PC-9 (cell line): ENCODE measurements at regions of chr3 and their contacts with region 1.

Region 1: GRCh38 chr3:24680214-24680967 is 185.7 kb upstream of the THRB start:
- DNase-seq: peak in 1 of 2 experiments; percentile 12
- H3K4me3 ChIP-seq: no peak overlapping the region
- H3K27ac ChIP-seq: no peak overlapping the region
- H3K4me1 ChIP-seq: peaks cover 24% of the 10 kb centered on the region
- H3K27me3 ChIP-seq: no peaks in the 10 kb centered on the region
- CTCF ChIP-seq: peak; percentile 56; the same call in 1 of the 2 replicates

Region 2: GRCh38 chr3:23888617-23889228 is 791.7 kb before region 1 on chr3:
- CTCF ChIA-PET with region 1: no interaction called
- POLR2A ChIA-PET with region 1: no interaction called
- intact Hi-C with region 1: loop called (anchors 5 kb)
- DNase-seq: no peak
- H3K4me3 ChIP-seq: no peak overlapping the region
- H3K27ac ChIP-seq: peak overlapping the region; percentile 57
- H3K4me1 ChIP-seq: peaks cover 28% of the 10 kb centered on the region
- H3K27me3 ChIP-seq: no peaks in the 10 kb centered on the region
- CTCF ChIP-seq: peak; percentile 92

Region 3: GRCh38 chr3:24069045-24069444 is 611.3 kb before region 1 on chr3:
- CTCF ChIA-PET with region 1: no interaction called
- POLR2A ChIA-PET with region 1: no interaction called
- intact Hi-C with region 1: loop called (anchors 1 kb)
- DNase-seq: peak in 1 of 2 experiments; percentile 17
- H3K4me3 ChIP-seq: no peak overlapping the region
- H3K27ac ChIP-seq: no peak overlapping the region
- H3K4me1 ChIP-seq: no peaks in the 10 kb centered on the region
- H3K27me3 ChIP-seq: no peaks in the 10 kb centered on the region
- CTCF ChIP-seq: peak; percentile 57

Region 4: DNA sequence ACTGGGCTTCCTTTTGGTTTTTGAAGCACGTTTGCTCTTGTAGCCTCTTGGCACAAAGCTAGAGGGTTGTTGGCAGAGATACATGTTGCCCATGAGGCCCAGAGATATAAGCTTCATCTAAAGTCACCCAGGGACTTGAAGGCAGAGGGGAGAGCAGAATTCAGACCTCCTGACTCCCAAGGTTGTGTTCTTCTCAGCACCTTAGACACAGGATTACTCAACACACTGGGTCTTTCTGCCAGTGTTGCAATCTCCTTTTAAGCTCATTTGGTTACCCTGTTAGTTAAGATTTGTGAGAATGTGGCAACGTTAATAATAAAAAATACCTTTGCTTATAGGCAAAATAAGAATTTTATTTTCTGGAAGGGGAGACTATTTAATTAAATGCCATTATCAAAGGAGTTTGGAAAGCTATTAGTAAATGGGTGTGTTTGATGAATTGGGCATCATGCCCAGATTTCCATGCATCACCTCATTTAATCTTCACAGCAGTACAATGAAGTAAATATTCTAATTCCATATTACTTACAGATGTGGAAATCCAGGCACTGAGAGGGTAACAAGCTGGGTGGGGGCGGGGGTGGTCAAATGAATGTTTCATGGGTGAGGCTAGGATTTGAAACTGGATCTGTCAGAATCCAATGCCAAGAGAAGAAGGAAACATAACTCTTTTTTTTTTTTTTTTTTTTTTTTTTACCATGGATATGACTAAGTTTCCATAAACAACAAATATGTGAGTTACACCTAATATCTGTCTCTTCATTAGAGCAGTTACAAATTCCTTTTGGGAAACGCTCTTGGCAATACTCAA is 552.0 kb before region 1 on chr3:
- CTCF ChIA-PET with region 1: no interaction called
- POLR2A ChIA-PET with region 1: no interaction called
- intact Hi-C with region 1: no loop called
- DNase-seq: peak; percentile 19 to 76
- H3K4me3 ChIP-seq: no peak overlapping the region
- H3K27ac ChIP-seq: peak overlapping the region; percentile 49
- H3K4me1 ChIP-seq: peaks cover 23% of the 10 kb centered on the region
- H3K27me3 ChIP-seq: no peaks in the 10 kb centered on the region
- CTCF ChIP-seq: no peak

Region 5: GRCh38 chr3:24185738-24186384 is 494.5 kb before region 1 on chr3:
- CTCF ChIA-PET with region 1: no interaction called
- POLR2A ChIA-PET with region 1: no interaction called
- intact Hi-C with region 1: loop called (anchors 1 kb)
- DNase-seq: peak in 1 of 2 experiments; percentile 12
- H3K4me3 ChIP-seq: no peak overlapping the region
- H3K27ac ChIP-seq: no peak overlapping the region
- H3K4me1 ChIP-seq: no peaks in the 10 kb centered on the region
- H3K27me3 ChIP-seq: no peaks in the 10 kb centered on the region
- CTCF ChIP-seq: peak; percentile 69

Region 6: GRCh38 chr3:24494618-24495325 is 185.6 kb before region 1 on chr3 and contains the start of gene THRB:
- CTCF ChIA-PET with region 1: no interaction called
- POLR2A ChIA-PET with region 1: no interaction called
- intact Hi-C with region 1: loop called (anchors 2 kb)
- DNase-seq: peak; percentile 49 to 75
- H3K4me3 ChIP-seq: peak within 1 kb of the TSS; percentile 65
- H3K27ac ChIP-seq: peak within 1 kb of the TSS; percentile 89
- H3K4me1 ChIP-seq: peaks cover 46% of the 10 kb centered on the region
- H3K27me3 ChIP-seq: no peaks in the 10 kb centered on the region
- CTCF ChIP-seq: peak; percentile 36; the same call in 1 of the 2 replicates
- total RNA-seq, gene THRB: 9.7 and 11.2 TPM in 2 replicates

Region 7: DNA sequence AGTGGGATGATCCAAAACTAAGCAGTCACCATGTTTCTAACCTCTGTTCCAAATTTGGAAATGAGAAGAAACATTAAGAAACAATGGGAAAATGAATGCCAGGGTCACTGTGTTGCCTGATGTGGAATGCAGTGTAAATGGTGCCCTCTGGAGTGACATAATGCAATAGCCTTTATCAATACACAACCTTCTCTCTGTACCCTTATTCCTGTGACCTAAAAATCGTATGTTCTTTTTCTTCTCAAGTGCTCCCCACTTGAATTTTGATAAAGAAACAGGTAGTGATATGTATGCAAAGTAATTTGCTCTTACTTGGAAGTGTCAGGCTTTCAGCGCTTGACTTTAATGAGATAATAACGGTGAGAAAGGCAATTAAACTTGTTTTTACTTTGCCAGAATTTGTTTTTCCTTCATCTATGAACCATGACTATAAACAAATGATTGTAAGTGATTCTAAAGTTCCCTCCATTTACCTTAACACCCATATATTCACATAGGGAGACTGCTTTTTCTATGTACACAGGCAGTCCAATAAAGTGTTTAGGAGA is 40.0 kb before region 1 on chr3:
- CTCF ChIA-PET with region 1: no interaction called
- POLR2A ChIA-PET with region 1: no interaction called
- intact Hi-C with region 1: loop called (anchors 5 kb)
- DNase-seq: peak in 1 of 2 experiments; percentile 6
- H3K4me3 ChIP-seq: no peak overlapping the region
- H3K27ac ChIP-seq: no peak overlapping the region
- H3K4me1 ChIP-seq: no peaks in the 10 kb centered on the region
- H3K27me3 ChIP-seq: no peaks in the 10 kb centered on the region
- CTCF ChIP-seq: peak; percentile 65

Region 8: DNA sequence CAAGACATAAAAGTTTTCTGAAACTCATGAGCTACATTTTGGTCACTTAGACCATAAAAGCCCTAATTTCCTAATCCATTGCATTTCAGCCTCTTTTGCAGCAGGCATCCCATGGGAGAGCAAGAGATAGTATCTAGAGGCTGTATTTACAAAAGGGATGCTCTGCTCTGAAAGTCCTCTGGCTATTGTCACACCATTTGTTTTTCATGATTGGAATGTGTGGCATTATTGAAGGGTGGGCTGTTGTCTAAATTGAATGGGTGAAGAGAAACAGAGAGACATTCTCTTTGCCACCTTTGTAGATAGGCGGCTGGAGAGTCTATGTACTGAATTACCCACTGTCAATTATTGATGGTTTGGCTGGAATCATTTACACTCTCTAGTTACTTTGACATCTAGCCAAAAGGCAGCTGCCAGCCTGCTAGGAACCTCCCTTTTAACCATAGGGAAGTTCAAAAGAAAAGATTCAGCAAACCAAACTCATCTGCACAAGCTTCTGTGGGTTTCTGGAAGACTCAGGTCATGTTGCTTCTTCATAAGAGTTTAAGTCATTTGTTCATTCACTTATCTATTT is 657.8 kb after region 1 on chr3:
- CTCF ChIA-PET with region 1: no interaction called
- POLR2A ChIA-PET with region 1: no interaction called
- intact Hi-C with region 1: no loop called
- DNase-seq: no peak
- H3K4me3 ChIP-seq: no peak overlapping the region
- H3K27ac ChIP-seq: no peak overlapping the region
- H3K4me1 ChIP-seq: no peaks in the 10 kb centered on the region
- H3K27me3 ChIP-seq: no peaks in the 10 kb centered on the region
- CTCF ChIP-seq: no peak

Region 9: DNA sequence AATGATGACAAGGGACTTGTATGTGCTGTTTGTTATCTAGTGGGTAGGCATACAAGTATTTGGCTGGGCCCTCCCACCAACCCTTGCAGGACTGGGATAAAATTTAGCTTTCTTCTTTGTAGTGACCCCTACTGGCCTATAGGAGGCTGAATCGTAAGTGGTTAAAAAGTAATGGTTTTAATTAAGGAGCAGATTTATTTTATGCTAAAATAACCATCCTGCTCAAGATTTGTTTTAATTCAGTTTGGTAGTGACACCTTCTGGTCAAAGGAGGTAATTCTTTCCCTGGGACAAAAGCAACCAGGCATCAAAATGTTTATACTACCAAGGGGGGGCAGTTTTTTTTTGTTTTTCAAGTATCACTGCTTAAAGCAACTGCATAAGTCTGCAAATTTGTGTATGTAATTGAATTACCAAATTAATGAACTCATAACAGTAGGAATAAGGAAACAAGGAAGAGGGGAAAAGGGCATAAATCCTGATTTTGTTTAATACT is 913.7 kb after region 1 on chr3:
- CTCF ChIA-PET with region 1: no interaction called
- POLR2A ChIA-PET with region 1: no interaction called
- intact Hi-C with region 1: loop called (anchors 1 kb)
- DNase-seq: peak; percentile 21 to 71
- H3K4me3 ChIP-seq: no peak overlapping the region
- H3K27ac ChIP-seq: no peak overlapping the region
- H3K4me1 ChIP-seq: peaks cover 13% of the 10 kb centered on the region
- H3K27me3 ChIP-seq: no peaks in the 10 kb centered on the region
- CTCF ChIP-seq: peak; percentile 92